Caco-2 (cell line): ENCODE measurements at regions of chr11 and their contacts with region 1.

Region 1: DNA sequence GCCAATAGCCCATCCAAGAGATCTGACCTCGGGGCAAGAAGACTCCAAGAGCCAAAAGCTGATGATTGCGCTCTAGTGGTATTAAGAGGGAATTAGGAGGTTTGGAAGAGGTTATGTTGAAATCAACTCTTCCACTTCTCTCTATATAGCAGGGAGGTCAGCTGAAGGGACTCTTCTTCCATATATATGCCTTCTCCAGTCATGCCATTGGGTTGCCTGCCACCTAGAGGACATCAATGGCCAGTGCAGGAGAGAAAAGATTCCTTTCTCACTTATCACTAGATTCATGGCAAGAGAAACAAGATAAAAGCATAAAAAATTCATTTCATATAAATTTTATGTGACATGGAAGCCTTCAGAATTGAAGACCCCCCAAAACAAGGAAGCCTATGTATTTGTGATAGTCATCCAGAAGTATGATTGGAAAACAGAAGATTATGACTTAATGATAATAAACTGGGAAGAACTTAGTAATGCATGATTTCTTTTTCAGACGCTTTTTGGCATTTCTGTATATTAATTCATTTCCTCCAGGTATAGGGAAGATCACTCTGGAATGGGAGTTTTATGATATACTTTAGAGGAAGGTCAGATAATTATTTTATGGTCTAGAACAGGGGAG is 435.1 kb upstream of the DDI1 start:
- DNase-seq: peak; percentile 68 to 72
- H3K4me3 ChIP-seq: no peak overlapping the region
- H3K4me3 Mint-ChIP-seq: no peak overlapping the region
- H3K27ac Mint-ChIP-seq: no peak overlapping the region
- H3K4me1 ChIP-seq: no peaks in the 10 kb centered on the region
- H3K4me1 Mint-ChIP-seq: no peaks in the 10 kb centered on the region
- H3K27me3 ChIP-seq: no peaks in the 10 kb centered on the region
- H3K27me3 Mint-ChIP-seq: peaks cover 12% of the 10 kb centered on the region
- CTCF ChIP-seq: peak; percentile 97 to 98

Region 2: DNA sequence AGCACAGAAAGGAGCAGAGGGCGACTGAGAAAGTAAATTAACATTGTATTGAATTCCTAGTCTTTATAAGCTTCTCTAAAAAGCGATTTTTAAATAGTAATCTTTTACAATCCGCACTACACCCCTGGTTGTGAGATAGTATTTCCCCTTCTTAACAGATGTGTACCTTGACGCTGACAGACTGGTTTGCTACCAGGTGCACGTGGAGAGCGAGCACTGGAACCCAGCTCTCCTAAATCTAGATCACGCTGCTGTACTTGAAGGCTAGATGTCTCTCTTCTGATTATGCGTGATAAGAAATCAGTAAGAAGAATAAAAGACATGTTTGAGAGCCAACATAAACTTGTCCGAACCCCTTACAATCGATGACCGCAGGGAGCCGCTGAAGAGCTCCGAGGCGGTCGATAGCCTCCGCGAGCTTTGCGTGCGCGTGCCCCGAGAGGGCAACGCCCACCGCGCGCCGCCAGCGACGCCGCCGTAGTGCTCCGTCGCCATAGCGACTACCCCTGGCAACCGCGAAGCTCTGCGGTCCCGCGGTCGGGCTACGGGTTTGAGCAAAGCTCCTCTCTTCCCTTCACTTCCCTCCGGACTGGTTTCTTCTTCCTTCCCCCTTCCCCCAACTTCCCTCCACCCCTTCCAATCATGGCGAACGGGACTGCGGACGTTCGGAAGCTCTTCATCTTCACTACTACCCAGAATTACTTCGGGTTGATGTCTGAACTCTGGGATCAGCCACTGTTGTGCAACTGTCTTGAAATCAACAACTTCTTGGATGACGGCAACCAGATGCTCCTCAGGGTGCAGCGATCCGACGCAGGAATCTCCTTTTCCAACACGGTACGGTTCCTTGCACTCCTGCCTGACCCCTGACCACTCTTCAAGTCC is 492.2 kb before region 1 on chr11 and contains the start of gene DYNC2H1:
- CTCF ChIA-PET with region 1: interaction called, 3 read pairs
- POLR2A ChIA-PET with region 1: no interaction called
- intact Hi-C with region 1: loop called (anchors 1 kb)
- DNase-seq: peak; percentile 91 to 96
- H3K4me3 ChIP-seq: peak within 1 kb of the TSS; percentile 66
- H3K4me3 Mint-ChIP-seq: peak within 1 kb of the TSS; percentile 81
- H3K27ac Mint-ChIP-seq: peak within 1 kb of the TSS; percentile 88
- H3K4me1 ChIP-seq: peaks cover 4% of the 10 kb centered on the region; the same call in 1 of the 2 replicates
- H3K4me1 Mint-ChIP-seq: no peaks in the 10 kb centered on the region
- H3K27me3 ChIP-seq: no peaks in the 10 kb centered on the region
- H3K27me3 Mint-ChIP-seq: no peaks in the 10 kb centered on the region
- CTCF ChIP-seq: peak; percentile 67 to 84
- total RNA-seq, gene DYNC2H1: 5.9 and 6.5 TPM in 2 replicates

Region 3: GRCh38 chr11:103257360-103257759 is 344.0 kb before region 1 on chr11:
- CTCF ChIA-PET with region 1: interaction called, 5 read pairs
- POLR2A ChIA-PET with region 1: no interaction called
- intact Hi-C with region 1: loop called (anchors 1 kb)
- DNase-seq: peak in 1 of 2 experiments; percentile 58
- H3K4me3 ChIP-seq: no peak overlapping the region
- H3K4me3 Mint-ChIP-seq: no peak overlapping the region
- H3K27ac Mint-ChIP-seq: no peak overlapping the region
- H3K4me1 ChIP-seq: no peaks in the 10 kb centered on the region
- H3K4me1 Mint-ChIP-seq: no peaks in the 10 kb centered on the region
- H3K27me3 ChIP-seq: no peaks in the 10 kb centered on the region
- H3K27me3 Mint-ChIP-seq: no peaks in the 10 kb centered on the region
- CTCF ChIP-seq: peak; percentile 76 to 77

Region 4: DNA sequence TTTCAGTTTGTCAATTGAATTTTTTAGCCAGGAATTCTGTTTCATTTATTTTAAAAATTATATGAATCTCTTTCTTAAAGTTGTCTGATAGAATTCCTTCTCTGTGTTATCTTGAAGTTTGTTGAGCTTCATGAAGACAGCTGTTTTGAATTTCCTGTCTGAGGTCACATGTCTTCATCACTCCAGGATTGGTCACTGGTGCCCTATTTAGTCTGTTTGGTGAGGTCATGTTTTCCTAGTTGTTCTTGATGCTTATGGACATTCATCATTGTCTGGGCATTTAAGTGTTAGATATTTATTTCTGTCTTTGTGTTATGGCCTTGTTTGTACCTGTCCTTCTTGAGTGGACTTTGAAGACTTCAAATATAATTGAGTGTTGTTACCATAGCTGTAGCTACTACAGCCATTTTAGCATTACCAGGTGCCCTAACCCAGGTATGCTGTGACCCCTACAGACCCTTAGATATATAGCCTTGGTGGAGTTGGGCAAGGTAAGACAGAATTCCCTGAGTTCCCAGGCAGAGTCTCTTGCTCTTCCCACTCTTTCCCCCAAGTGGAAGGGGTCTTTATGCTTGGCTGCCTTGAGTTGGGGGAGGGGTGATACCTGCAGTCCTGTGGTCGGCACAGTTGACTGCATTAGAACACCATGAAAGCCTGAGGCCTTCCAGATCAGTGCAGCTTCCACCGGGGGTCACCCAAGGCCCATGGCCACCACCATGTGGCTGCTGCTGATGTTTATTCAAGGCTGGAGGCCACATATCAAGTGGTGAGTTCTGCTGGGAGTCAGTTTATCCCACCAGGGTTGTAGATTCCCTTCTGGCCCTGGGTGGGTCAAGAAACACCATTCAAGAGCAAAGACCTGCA is 262.5 kb before region 1 on chr11:
- CTCF ChIA-PET with region 1: interaction called, 6 read pairs
- POLR2A ChIA-PET with region 1: no interaction called
- intact Hi-C with region 1: loop called (anchors 1 kb)
- DNase-seq: peak; percentile 69 to 79
- H3K4me3 ChIP-seq: no peak overlapping the region
- H3K4me3 Mint-ChIP-seq: no peak overlapping the region
- H3K27ac Mint-ChIP-seq: no peak overlapping the region
- H3K4me1 ChIP-seq: no peaks in the 10 kb centered on the region
- H3K4me1 Mint-ChIP-seq: no peaks in the 10 kb centered on the region
- H3K27me3 ChIP-seq: no peaks in the 10 kb centered on the region
- H3K27me3 Mint-ChIP-seq: no peaks in the 10 kb centered on the region
- CTCF ChIP-seq: peak; percentile 53 to 84

Region 5: GRCh38 chr11:103464420-103464819 is 136.9 kb before region 1 on chr11:
- CTCF ChIA-PET with region 1: no interaction called
- POLR2A ChIA-PET with region 1: no interaction called
- intact Hi-C with region 1: loop called (anchors 2 kb)
- DNase-seq: no peak
- H3K4me3 ChIP-seq: no peak overlapping the region
- H3K4me3 Mint-ChIP-seq: no peak overlapping the region
- H3K27ac Mint-ChIP-seq: no peak overlapping the region
- H3K4me1 ChIP-seq: no peaks in the 10 kb centered on the region
- H3K4me1 Mint-ChIP-seq: no peaks in the 10 kb centered on the region
- H3K27me3 ChIP-seq: no peaks in the 10 kb centered on the region
- H3K27me3 Mint-ChIP-seq: no peaks in the 10 kb centered on the region
- CTCF ChIP-seq: no peak

Region 6: DNA sequence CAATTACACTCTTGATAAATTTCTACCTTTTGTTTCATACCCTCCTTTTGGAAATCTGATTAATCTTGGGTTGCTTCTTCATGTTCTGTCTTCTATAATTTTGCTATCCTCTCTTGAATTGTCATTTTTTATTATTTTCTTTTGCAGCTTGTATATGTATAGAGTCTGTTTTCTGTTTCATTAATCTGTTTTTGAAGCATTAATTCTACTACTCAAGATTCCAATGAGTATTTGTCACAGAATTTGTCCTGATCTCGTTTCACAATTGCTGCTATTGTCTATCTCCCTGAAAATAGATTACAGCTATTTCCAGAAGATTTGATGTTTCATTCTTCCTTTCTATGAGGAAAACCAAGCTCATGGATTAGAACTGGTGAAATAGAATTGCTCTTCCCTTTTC is 86.1 kb before region 1 on chr11:
- CTCF ChIA-PET with region 1: no interaction called
- POLR2A ChIA-PET with region 1: no interaction called
- intact Hi-C with region 1: loop called (anchors 5 kb)
- DNase-seq: no peak
- H3K4me3 ChIP-seq: no peak overlapping the region
- H3K4me3 Mint-ChIP-seq: no peak overlapping the region
- H3K27ac Mint-ChIP-seq: no peak overlapping the region
- H3K4me1 ChIP-seq: peaks cover 15% of the 10 kb centered on the region; the same call in 1 of the 2 replicates
- H3K4me1 Mint-ChIP-seq: peaks cover 24% of the 10 kb centered on the region
- H3K27me3 ChIP-seq: no peaks in the 10 kb centered on the region
- H3K27me3 Mint-ChIP-seq: no peaks in the 10 kb centered on the region
- CTCF ChIP-seq: no peak